ENCODE measurements at regions of chr22 and their contacts with region 1.

Region 1: DNA sequence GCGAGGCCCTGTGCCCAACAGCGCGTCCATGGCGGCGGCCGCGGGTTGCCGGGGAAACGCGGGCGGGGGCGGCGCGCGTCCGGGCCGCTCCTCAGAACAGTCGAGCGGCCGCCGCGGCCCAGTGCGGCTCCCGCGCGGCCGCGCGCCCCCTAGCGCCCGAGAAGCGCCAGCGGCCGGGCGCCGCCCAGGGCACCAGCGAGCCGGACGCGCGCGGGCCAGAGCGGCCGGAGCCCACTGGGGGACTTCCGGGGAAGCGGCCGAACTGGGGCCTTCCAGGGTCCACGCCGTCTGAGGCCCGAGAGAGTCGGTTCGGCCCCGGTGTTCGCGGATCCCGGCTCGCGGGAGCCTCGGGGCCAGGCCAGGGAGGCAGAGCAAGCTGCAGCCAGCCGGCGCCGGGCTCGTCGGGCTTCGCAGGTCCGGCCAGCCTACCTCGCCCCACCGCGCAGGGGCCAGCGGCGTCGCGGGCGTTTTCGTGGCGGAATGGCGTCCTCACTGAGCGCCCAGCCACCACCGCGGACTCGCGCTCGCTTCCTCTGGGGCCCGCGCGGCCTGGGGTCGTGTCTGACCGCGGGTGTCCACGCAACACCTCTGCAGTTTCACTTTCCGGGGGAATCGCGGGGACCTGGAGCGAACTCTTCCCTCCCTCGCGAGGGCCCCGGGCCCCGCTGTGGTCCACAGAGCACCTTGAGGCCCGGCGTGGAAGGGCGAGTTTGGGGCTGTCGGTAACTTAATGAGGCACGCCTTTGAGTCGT is at the start of gene DENND6B:
- DNase-seq: peak; percentile 92
- ATAC-seq: peak; percentile 98
- total RNA-seq, gene DENND6B: 1.1 TPM

Region 2: GRCh38 chr22:50250555-50251476 is 76.3 kb before region 1 on chr22 and contains the start of gene HDAC10:
- intact Hi-C with region 1: loop called (anchors 5 kb)
- DNase-seq: peak; percentile 92
- ATAC-seq: peak; percentile 86
- total RNA-seq, gene HDAC10: 12.0 TPM

Region 3: DNA sequence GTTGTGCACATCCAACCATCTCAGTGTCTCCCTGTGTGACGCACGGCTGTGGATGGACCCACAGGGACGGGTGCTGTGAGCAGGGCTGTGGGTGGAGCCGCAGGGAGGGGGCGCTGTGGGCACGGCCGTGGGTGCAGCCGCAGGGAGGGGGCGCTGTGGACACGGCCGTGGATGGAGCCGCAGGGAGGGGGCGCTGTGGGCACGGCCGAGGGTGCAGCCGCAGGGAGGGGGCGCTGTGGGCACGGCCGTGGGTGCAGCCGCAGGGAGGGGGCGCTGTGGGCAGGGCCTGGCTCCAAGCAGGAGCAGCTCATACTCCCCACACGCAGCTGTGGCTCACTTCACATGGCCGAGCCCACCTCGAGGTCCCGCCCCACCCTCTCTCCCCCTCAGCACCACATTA is 51.0 kb before region 1 on chr22:
- intact Hi-C with region 1: loop called (anchors 5 kb)
- DNase-seq: peak; percentile 78
- ATAC-seq: peak; percentile 90

Measured in Right ventricle myocardium superior (tissue), 1 donor.